T-cell (primary cell): ENCODE measurements at regions of chr1 and their contacts with region 1.

Region 1: DNA sequence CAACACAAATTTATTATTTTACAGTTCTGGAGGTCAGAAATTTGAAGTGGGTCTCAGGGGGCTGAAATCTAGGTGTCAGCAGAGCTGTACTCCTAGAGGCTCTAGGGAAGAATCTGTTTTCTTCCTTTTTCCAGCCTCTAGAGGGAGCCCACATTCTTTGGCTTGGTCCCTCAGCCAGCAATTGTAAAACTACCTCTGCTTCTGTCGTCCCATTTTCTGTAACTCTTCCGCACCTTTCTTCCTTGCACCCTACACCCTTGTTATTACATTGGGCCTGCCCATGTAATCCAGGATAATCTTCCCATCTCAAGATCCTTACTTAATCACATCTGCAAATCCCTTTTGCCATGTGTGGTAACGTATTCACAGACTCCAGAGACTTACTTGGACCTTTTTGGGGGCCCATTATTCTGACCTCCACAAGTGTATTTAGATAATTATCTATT is 24.8 kb upstream of the THEM4 start:
- DNase-seq: peak in 25 of 35 experiments; percentile 9 to 82 (median 31)
- ATAC-seq: peak; percentile 75 to 86 (median 83)
- H3K4me3 ChIP-seq: no peak overlapping the region
- H3K4me3 Mint-ChIP-seq: no peak overlapping the region
- H3K27ac ChIP-seq: no peak overlapping the region
- H3K27ac Mint-ChIP-seq: peak overlapping the region; percentile 23 to 46
- H3K4me1 ChIP-seq: peaks cover 0 to 3% of the 10 kb centered on the region in 2 experiments
- H3K4me1 Mint-ChIP-seq: peaks cover 5 to 8% (median 6%) of the 10 kb centered on the region in 3 donors
- H3K27me3 ChIP-seq: no peaks in the 10 kb centered on the region
- H3K27me3 Mint-ChIP-seq: peaks cover 3 to 4% of the 10 kb centered on the region in 2 donors

Region 2: GRCh38 chr1:151945725-151946364 is 11.8 kb after region 1 on chr1:
- CTCF ChIA-PET with region 1: interaction called in 1 of 2 experiments, 29 read pairs
- POLR2A ChIA-PET with region 1: no interaction called
- DNase-seq: peak; percentile 30 to 93 (median 77)
- ATAC-seq: peak; percentile 73 to 92 (median 84)
- H3K4me3 ChIP-seq: no peak overlapping the region
- H3K4me3 Mint-ChIP-seq: peak overlapping the region; percentile 19 to 68 (median 36)
- H3K27ac ChIP-seq: peak overlapping the region; percentile 96
- H3K27ac Mint-ChIP-seq: peak overlapping the region; percentile 89 to 94
- H3K4me1 ChIP-seq: peaks cover 5 to 30% of the 10 kb centered on the region in 2 experiments
- H3K4me1 Mint-ChIP-seq: peaks cover 29 to 49% (median 36%) of the 10 kb centered on the region in 3 donors
- H3K27me3 ChIP-seq: peaks cover 0 to 2% of the 10 kb centered on the region in 2 experiments
- H3K27me3 Mint-ChIP-seq: no peaks in the 10 kb centered on the region

Region 3: GRCh38 chr1:151993654-151994496 is 59.8 kb after region 1 on chr1 and contains the start of gene S100A10:
- CTCF ChIA-PET with region 1: interaction called, 4 to 71 read pairs
- POLR2A ChIA-PET with region 1: no interaction called
- DNase-seq: peak; percentile 66 to 88 (median 76)
- ATAC-seq: peak; percentile 89 to 94 (median 91)
- H3K4me3 ChIP-seq: peak within 1 kb of the TSS; percentile 65 to 92
- H3K4me3 Mint-ChIP-seq: peak within 1 kb of the TSS; percentile 93 to 97 (median 96)
- H3K27ac ChIP-seq: peak within 1 kb of the TSS; percentile 89
- H3K27ac Mint-ChIP-seq: peak within 1 kb of the TSS; percentile 96 to 97
- H3K4me1 ChIP-seq: peaks cover 12 to 39% of the 10 kb centered on the region in 2 experiments
- H3K4me1 Mint-ChIP-seq: peaks cover 46 to 54% (median 48%) of the 10 kb centered on the region in 3 donors
- H3K27me3 ChIP-seq: peaks cover 0 to 2% of the 10 kb centered on the region in 2 experiments
- H3K27me3 Mint-ChIP-seq: no peaks in the 10 kb centered on the region
- total RNA-seq, gene S100A10: 157 to 277 (median 264) TPM